CD8-positive, alpha-beta T cell (primary cell): ENCODE measurements at regions of chrX and their contacts with region 1.

Region 1: GRCh38 chrX:120664081-120664480 is 34.2 kb upstream of the C1GALT1C1 start:
- DNase-seq: peak in 2 of 9 experiments; percentile 19 to 38
- ATAC-seq: no peak
- H3K4me3 ChIP-seq: no peak overlapping the region
- H3K4me3 Mint-ChIP-seq: no peak overlapping the region
- H3K27ac ChIP-seq: no peak overlapping the region
- H3K27ac Mint-ChIP-seq: no peak overlapping the region
- H3K4me1 ChIP-seq: no peaks in the 10 kb centered on the region
- H3K4me1 Mint-ChIP-seq: no peaks in the 10 kb centered on the region
- H3K27me3 ChIP-seq: no peaks in the 10 kb centered on the region
- H3K27me3 Mint-ChIP-seq: no peaks in the 10 kb centered on the region
- CTCF ChIP-seq: peak; percentile 34

Region 2: GRCh38 chrX:120244735-120245498 is 419.2 kb before region 1 on chrX:
- CTCF ChIA-PET with region 1: no interaction called
- POLR2A ChIA-PET with region 1: no interaction called
- intact Hi-C with region 1: no loop called
- DNase-seq: peak; percentile 28 to 77 (median 59)
- ATAC-seq: peak; percentile 88
- H3K4me3 ChIP-seq: peak overlapping the region; percentile 87 to 90
- H3K4me3 Mint-ChIP-seq: peak overlapping the region; percentile 98
- H3K27ac ChIP-seq: peak overlapping the region; percentile 73 to 90
- H3K27ac Mint-ChIP-seq: peak overlapping the region; percentile 93
- H3K4me1 ChIP-seq: peaks cover 15% of the 10 kb centered on the region
- H3K4me1 Mint-ChIP-seq: peaks cover 26% of the 10 kb centered on the region
- H3K27me3 ChIP-seq: no peaks in the 10 kb centered on the region
- H3K27me3 Mint-ChIP-seq: peaks cover 2% of the 10 kb centered on the region
- CTCF ChIP-seq: no peak

Region 3: GRCh38 chrX:120372667-120373370 is 291.3 kb before region 1 on chrX:
- CTCF ChIA-PET with region 1: no interaction called
- POLR2A ChIA-PET with region 1: no interaction called
- intact Hi-C with region 1: loop called in 1 of 2 experiments (anchors 10 kb)
- DNase-seq: no peak
- ATAC-seq: no peak
- H3K4me3 ChIP-seq: no peak overlapping the region
- H3K4me3 Mint-ChIP-seq: no peak overlapping the region
- H3K27ac ChIP-seq: no peak overlapping the region
- H3K27ac Mint-ChIP-seq: no peak overlapping the region
- H3K4me1 ChIP-seq: no peaks in the 10 kb centered on the region
- H3K4me1 Mint-ChIP-seq: no peaks in the 10 kb centered on the region
- H3K27me3 ChIP-seq: no peaks in the 10 kb centered on the region
- H3K27me3 Mint-ChIP-seq: no peaks in the 10 kb centered on the region
- CTCF ChIP-seq: no peak

Region 4: GRCh38 chrX:120499301-120500072 is 164.6 kb before region 1 on chrX:
- CTCF ChIA-PET with region 1: interaction called, 9 read pairs
- POLR2A ChIA-PET with region 1: no interaction called
- intact Hi-C with region 1: loop called (anchors 1 kb)
- DNase-seq: no peak
- ATAC-seq: no peak
- H3K4me3 ChIP-seq: no peak overlapping the region
- H3K4me3 Mint-ChIP-seq: no peak overlapping the region
- H3K27ac ChIP-seq: no peak overlapping the region
- H3K27ac Mint-ChIP-seq: no peak overlapping the region
- H3K4me1 ChIP-seq: no peaks in the 10 kb centered on the region
- H3K4me1 Mint-ChIP-seq: peaks cover 5% of the 10 kb centered on the region
- H3K27me3 ChIP-seq: no peaks in the 10 kb centered on the region
- H3K27me3 Mint-ChIP-seq: no peaks in the 10 kb centered on the region
- CTCF ChIP-seq: no peak

Region 5: DNA sequence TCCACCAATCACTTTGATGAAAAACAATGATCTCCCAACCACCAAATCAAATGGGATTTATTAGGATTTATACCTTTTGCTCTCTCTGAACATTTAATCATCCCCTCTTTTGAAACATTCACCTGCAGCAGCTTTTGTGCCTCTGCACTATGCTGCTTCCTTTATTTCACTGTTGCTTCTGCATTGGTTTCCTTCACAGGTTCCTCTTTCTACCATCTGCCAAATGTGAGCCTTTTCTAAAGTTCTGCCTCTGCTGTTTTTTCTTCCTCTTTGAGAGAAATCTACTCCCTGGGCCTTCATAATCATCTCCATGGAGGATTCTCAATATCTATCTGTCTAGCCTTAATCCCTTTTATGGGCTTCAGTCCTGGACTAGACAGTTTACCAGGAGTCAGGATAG is 128.0 kb before region 1 on chrX:
- CTCF ChIA-PET with region 1: no interaction called
- POLR2A ChIA-PET with region 1: no interaction called
- intact Hi-C with region 1: loop called in 1 of 2 experiments (anchors 10 kb)
- DNase-seq: no peak
- ATAC-seq: no peak
- H3K4me3 ChIP-seq: no peak overlapping the region
- H3K4me3 Mint-ChIP-seq: no peak overlapping the region
- H3K27ac ChIP-seq: no peak overlapping the region
- H3K27ac Mint-ChIP-seq: peak overlapping the region; percentile 60
- H3K4me1 ChIP-seq: no peaks in the 10 kb centered on the region
- H3K4me1 Mint-ChIP-seq: no peaks in the 10 kb centered on the region
- H3K27me3 ChIP-seq: no peaks in the 10 kb centered on the region
- H3K27me3 Mint-ChIP-seq: no peaks in the 10 kb centered on the region
- CTCF ChIP-seq: no peak

Region 6: GRCh38 chrX:120761810-120762209 is 97.7 kb after region 1 on chrX:
- CTCF ChIA-PET with region 1: no interaction called
- POLR2A ChIA-PET with region 1: no interaction called
- intact Hi-C with region 1: no loop called
- DNase-seq: no peak
- ATAC-seq: no peak
- H3K4me3 ChIP-seq: no peak overlapping the region
- H3K4me3 Mint-ChIP-seq: no peak overlapping the region
- H3K27ac ChIP-seq: no peak overlapping the region
- H3K27ac Mint-ChIP-seq: no peak overlapping the region
- H3K4me1 ChIP-seq: no peaks in the 10 kb centered on the region
- H3K4me1 Mint-ChIP-seq: peaks cover 7% of the 10 kb centered on the region
- H3K27me3 ChIP-seq: no peaks in the 10 kb centered on the region
- H3K27me3 Mint-ChIP-seq: no peaks in the 10 kb centered on the region
- CTCF ChIP-seq: no peak